ENCODE measurements at regions of chr18 and their contacts with region 1.

Region 1: DNA sequence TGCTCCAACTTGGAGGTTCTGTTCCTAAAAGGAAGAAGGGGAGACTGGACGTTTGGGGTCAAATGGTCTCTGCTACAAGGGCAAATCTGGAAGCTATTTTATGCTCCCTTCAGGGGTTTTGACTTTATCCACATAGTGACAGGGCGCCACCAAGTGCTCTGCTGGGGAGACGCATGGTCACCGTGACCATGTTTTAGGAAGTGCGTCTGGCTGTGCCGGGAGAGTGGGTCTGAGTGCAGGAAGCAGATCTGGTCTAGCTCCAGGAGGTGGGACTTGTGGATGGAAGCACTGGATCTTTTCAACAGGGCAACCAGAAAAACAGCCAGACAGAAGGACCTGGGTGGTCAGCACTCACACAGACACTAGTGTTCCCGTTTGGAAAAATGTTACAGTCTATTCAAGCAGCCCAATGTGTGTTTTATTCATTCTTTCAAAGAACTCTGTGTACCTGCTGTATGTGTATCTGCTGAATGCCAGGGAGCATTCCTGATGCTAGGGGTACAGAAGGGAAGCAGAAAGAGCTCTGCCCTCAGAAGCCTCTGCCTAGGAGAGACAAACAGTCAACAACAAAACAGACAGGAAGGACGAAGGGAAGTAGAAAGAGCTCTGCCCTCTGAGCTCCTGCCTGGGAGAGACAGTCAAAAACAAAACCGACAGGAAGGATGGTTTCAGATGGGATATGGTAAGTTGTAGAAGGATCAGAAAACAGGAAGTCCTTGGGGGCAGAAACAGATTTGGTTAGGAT is 14.3 kb downstream of the IMPA2 start:
- DNase-seq: peak; percentile 68
- H3K4me3 Mint-ChIP-seq: no peak overlapping the region
- H3K27ac Mint-ChIP-seq: no peak overlapping the region
- H3K4me1 Mint-ChIP-seq: peaks cover 30% of the 10 kb centered on the region
- H3K27me3 Mint-ChIP-seq: no peaks in the 10 kb centered on the region
- CTCF ChIP-seq: peak; percentile 62

Region 2: GRCh38 chr18:11937874-11938478 is 57.6 kb before region 1 on chr18:
- CTCF ChIA-PET with region 1: interaction called, 64 read pairs
- intact Hi-C with region 1: loop called (anchors 1 kb)
- DNase-seq: peak; percentile 81
- H3K4me3 Mint-ChIP-seq: no peak overlapping the region
- H3K27ac Mint-ChIP-seq: no peak overlapping the region
- H3K4me1 Mint-ChIP-seq: peaks cover 6% of the 10 kb centered on the region
- H3K27me3 Mint-ChIP-seq: peaks cover 17% of the 10 kb centered on the region
- CTCF ChIP-seq: peak; percentile 66

Region 3: DNA sequence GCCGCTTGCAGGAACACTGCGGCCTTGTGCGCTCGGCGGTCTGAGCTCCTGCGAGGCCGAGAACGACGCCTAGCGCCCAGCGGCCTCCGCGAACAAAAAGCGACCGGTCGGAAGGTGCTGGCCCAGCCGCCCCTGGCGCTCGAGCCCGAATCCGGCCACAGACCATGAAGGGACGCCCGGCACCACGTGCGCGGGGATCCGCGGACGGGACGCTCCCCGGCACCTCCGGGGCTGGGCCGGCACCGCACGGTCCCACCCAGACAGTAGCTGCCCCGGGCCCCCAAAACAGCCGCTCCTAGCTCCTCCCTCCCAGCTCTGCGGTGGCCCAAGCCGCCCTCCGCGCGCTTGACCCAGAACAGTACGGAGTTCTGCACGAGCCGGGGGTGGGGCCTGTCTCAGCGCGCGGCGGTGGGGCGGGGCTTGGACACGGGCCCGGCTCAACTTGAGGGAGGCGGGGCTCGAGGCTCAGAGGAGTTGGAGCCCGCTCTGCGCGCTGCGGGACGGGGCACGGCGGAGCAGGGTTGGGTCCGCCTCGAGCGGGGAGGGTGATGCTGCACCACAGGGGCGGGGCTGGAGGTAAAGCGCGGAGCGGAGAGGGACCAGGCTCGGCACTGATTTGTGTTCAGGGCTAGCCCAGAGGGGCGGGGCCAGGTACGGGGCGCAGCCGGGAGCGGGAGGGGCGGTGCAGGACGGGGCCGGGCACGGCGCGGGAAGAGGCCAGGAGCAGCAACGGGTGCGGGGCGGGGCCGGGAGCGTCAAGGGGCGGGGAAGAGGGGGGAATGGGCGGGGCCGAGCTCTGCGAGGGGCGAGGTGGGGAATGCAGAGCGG is 14.8 kb before region 1 on chr18:
- CTCF ChIA-PET with region 1: interaction called, 14 read pairs
- intact Hi-C with region 1: no loop called
- DNase-seq: peak; percentile 99
- H3K4me3 Mint-ChIP-seq: peak overlapping the region; percentile 85
- H3K27ac Mint-ChIP-seq: peak overlapping the region; percentile 70
- H3K4me1 Mint-ChIP-seq: no peaks in the 10 kb centered on the region
- H3K27me3 Mint-ChIP-seq: no peaks in the 10 kb centered on the region
- CTCF ChIP-seq: peak; percentile 27

Region 4: GRCh38 chr18:12060182-12060870 is 64.7 kb after region 1 on chr18:
- CTCF ChIA-PET with region 1: no interaction called
- intact Hi-C with region 1: no loop called
- DNase-seq: peak; percentile 39
- H3K4me3 Mint-ChIP-seq: no peak overlapping the region
- H3K27ac Mint-ChIP-seq: no peak overlapping the region
- H3K4me1 Mint-ChIP-seq: no peaks in the 10 kb centered on the region
- H3K27me3 Mint-ChIP-seq: peaks cover 20% of the 10 kb centered on the region
- CTCF ChIP-seq: no peak